ENCODE measurements at regions of chr2 and their contacts with region 1.

Region 1: GRCh38 chr2:96869822-96870625 is at the start of gene SEMA4C:
- DNase-seq: no peak
- H3K4me3 ChIP-seq: peak within 1 kb of the TSS; percentile 77 to 88 (median 85)
- H3K27ac ChIP-seq: peak within 1 kb of the TSS; percentile 32
- H3K4me1 ChIP-seq: peaks cover 10% of the 10 kb centered on the region
- H3K27me3 ChIP-seq: no peaks in the 10 kb centered on the region
- CTCF ChIP-seq: no peak
- total RNA-seq, gene SEMA4C: 13.2 to 14.0 TPM

Region 2: DNA sequence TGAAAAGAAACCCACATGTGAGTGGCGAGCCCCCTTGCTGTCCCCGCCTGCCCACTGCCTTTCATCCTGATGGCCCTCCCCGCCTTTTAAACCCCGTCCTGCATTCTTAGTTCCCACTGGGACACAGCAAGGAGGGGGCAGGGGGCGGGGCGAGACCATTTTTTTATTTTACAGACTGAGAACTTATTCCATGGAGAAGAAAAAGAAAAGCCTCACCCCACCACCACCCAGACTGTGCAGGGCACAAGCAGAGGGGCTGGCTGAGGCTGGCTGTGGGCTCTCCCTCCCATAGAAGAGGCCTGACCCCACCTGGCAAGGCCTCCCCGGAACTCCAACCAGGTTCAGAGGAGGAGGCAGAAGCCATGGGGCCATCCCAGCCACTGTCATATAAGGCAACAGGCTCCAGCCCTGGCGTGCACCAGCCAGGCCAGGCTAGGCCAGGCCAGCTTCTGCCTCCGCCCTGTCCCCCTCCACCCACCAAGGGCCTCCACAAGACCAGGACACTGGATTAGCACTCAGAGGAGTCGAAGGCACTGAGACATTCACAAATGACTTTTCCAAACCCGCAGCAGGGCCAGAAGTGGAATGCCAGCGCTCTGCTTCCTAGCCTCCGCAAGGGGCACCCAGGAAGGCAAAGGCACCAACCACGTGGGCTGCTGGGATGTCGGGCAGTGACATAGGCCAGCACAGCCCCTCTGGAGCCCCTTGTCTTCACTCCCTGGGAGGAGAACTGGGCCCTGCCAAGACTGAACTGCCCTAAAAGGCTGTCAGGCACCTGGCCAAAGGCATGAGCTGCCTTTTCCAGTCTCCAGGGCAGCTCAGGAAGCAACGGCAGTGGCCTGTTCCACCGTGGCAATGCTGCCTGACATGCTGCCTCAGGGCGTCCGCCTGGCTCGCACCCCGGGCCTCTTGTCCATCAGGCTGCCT is 37.4 kb after region 1 on chr2:
- CTCF ChIA-PET with region 1: interaction called, 3 read pairs
- dilution Hi-C with region 1: loop called (anchors 5 kb)
- in situ Hi-C with region 1: no loop called
- intact Hi-C with region 1: no loop called
- DNase-seq: no peak
- H3K4me3 ChIP-seq: no peak overlapping the region
- H3K27ac ChIP-seq: no peak overlapping the region
- H3K4me1 ChIP-seq: no peaks in the 10 kb centered on the region
- H3K27me3 ChIP-seq: no peaks in the 10 kb centered on the region
- CTCF ChIP-seq: no peak

Region 3: DNA sequence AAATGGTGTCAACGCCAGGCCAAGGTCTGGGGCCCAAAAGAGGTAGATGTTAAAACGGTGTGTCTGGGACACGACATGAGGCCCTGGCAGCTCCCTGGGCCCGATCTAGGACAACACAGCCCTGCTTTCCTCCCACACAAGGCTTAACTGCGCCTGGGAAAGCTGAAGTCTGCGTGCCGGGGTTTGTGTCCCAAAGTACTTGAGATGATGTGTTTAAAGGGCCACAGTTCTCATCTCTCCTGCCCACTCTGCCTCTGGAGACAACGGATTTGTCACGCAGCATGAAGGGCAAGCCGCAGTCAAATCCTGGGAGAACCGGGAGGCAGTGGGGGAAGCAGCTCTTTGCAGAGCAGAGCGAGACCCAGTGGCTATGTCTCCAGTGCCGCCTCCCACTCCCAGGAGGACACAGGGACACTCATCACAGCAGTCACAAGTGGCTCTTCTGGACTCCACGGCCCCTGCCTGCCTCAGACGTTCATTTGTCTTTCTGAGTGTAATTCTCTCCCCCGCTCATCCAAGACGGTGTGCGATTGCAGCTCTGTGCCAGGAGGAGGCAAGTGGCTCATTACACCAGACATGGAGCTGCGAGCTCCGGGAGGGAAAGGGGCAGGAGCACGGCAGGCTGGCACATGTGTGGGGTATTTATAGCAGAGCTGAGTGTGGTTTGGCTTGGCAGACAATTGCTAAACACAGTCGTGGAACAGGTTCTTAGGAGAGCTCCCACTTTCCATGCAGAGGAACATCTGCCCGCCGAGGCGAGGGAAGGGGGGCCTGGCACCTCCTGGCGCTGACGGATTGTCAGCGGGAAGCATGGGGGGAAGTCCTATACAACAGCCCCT is 57.6 kb after region 1 on chr2:
- CTCF ChIA-PET with region 1: interaction called, 5 read pairs
- dilution Hi-C with region 1: no loop called
- in situ Hi-C with region 1: no loop called
- intact Hi-C with region 1: loop called (anchors 1 kb)
- DNase-seq: peak; percentile 92
- H3K4me3 ChIP-seq: peak overlapping the region in 1 of 3 experiments; percentile 22
- H3K27ac ChIP-seq: no peak overlapping the region
- H3K4me1 ChIP-seq: peaks cover 21% of the 10 kb centered on the region
- H3K27me3 ChIP-seq: no peaks in the 10 kb centered on the region
- CTCF ChIP-seq: peak; percentile 40 to 69

Measured in mammary epithelial cell (primary cell).